Mammary epithelial cell (primary cell): ENCODE measurements at regions of chr3 and their contacts with region 1.

Region 1: DNA sequence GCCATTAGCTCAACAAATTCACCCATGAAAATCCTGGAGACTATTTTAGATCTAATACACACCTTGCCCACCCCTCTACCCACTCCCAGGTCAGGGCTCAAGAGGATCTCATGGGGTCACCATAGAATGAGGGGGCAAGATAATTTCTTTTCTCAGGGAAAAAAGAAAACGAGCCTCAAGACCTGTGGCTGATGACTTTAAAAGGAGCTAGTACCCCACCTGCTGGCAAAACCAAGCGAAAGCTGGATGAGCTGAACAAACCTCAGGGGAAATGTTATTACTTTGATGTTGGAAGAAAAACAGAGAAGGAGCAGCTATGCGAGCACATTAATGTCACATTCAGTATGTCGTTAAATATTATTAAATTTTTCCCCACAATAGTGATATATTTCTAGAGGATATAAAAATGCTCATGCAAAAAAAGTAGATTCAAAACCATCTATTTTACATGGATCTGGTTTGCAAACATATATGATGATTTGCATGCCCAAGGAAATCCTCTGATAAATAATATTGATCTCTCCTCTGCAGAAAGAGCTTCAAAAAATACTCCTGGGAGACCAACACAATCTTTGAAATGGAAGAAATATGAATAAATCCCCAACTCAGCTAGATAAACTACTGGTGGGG is 37.7 kb downstream of the PLD1 start:
- DNase-seq: peak; percentile 60
- H3K4me3 ChIP-seq: no peak overlapping the region
- H3K27ac ChIP-seq: peak overlapping the region; percentile 83
- H3K4me1 ChIP-seq: peaks cover 32% of the 10 kb centered on the region
- H3K27me3 ChIP-seq: no peaks in the 10 kb centered on the region
- CTCF ChIP-seq: peak; percentile 80 to 87

Region 2: GRCh38 chr3:171162986-171163723 is 609.4 kb before region 1 on chr3:
- CTCF ChIA-PET with region 1: no interaction called
- dilution Hi-C with region 1: no loop called
- in situ Hi-C with region 1: no loop called
- intact Hi-C with region 1: loop called (anchors 10 kb)
- DNase-seq: no peak
- H3K4me3 ChIP-seq: no peak overlapping the region
- H3K27ac ChIP-seq: no peak overlapping the region
- H3K4me1 ChIP-seq: peaks cover 16% of the 10 kb centered on the region
- H3K27me3 ChIP-seq: no peaks in the 10 kb centered on the region
- CTCF ChIP-seq: peak; percentile 55 to 60

Region 3: DNA sequence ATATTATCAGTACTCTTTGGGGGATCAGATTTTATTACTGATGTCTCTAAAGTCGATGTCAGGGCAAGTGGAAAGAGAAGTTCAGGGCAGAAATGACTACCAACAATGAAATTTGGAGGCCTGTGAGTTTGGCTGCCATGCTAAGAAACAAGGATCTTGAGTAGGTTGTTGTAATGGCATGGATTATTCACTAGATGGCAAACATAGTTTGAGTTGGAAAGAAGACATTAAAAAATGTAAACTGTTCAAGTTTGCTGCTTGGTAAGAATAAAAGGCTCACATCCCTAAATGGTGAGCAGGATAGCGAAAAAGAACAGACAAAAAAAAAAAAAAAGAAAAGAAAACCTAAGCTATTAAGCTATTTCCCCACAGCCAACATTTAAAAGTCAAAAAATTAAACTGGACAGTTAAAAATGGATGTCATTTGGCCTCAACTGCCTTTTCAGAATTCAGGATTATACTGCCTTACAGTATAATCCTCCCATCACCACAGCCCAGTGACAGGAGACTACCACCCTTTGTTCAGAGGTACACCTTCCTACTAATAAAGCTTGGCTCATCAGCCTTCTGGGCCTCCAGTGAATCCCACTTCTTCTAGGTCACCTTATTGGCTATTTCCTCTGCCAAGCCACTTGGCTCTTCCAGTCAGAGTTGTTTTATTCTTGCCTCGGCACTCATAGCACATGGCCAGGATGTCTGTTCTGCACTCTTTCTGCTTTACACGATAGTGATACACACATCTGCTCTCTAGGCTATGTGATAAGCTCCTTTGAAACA is 126.0 kb before region 1 on chr3:
- CTCF ChIA-PET with region 1: interaction called, 5 read pairs
- dilution Hi-C with region 1: loop called (anchors 5 kb)
- in situ Hi-C with region 1: loop called (anchors 5 to 10 kb)
- intact Hi-C with region 1: loop called (anchors 1 kb)
- DNase-seq: peak; percentile 46
- H3K4me3 ChIP-seq: no peak overlapping the region
- H3K27ac ChIP-seq: no peak overlapping the region
- H3K4me1 ChIP-seq: no peaks in the 10 kb centered on the region
- H3K27me3 ChIP-seq: no peaks in the 10 kb centered on the region
- CTCF ChIP-seq: peak; percentile 57 to 66

Region 4: GRCh38 chr3:171703756-171704401 is 68.7 kb before region 1 on chr3:
- CTCF ChIA-PET with region 1: interaction called, 7 read pairs
- dilution Hi-C with region 1: no loop called
- in situ Hi-C with region 1: loop called (anchors 5 kb)
- intact Hi-C with region 1: loop called (anchors 1 kb)
- DNase-seq: peak; percentile 49
- H3K4me3 ChIP-seq: no peak overlapping the region
- H3K27ac ChIP-seq: no peak overlapping the region
- H3K4me1 ChIP-seq: no peaks in the 10 kb centered on the region
- H3K27me3 ChIP-seq: no peaks in the 10 kb centered on the region
- CTCF ChIP-seq: peak; percentile 71 to 80

Region 5: DNA sequence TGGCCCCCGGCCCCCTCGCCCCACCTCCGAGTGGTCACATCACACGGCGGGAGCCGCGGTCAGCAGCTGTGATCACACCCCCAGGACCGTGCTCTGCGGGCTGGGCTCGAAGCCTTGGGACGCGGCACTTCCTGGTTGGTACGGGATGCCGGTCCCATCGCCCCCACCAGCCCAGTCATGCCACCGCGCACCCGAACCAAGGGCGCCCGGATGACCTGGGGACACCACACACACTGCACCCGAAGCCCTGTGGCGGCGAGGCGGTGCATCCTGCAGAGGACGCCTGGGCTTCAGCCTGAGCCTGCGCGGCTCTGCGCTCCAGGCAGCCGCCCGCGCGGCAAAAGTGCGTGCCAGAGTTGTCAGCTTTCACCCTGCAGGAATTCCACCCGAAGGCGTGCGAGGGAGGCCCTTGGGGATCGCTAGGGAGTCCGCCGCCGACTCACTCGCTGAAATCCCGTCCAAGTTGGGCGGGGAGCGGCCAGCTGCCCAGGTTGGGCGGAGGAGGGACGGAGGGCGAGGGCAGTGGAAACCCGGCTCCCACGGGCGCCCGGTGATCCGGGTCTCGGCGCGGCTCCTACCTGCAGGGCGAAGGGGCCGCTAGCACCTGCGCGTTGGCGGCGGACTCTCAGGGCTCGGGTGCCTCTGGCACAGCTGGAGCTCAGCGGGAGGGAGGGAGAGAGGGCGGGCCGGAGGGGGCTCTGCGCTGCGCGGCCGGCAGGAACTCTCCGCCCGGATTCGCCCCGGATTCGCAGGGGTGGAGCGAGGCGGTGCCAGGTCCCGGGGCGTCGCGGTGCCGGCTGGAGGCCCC is 37.5 kb after region 1 on chr3 and contains the start of gene PLD1:
- CTCF ChIA-PET with region 1: interaction called, 3 read pairs
- dilution Hi-C with region 1: loop called (anchors 5 kb)
- in situ Hi-C with region 1: no loop called
- intact Hi-C with region 1: loop called (anchors 5 kb)
- DNase-seq: peak; percentile 94
- H3K4me3 ChIP-seq: peak within 1 kb of the TSS; percentile 51 to 86 (median 82)
- H3K27ac ChIP-seq: peak within 1 kb of the TSS; percentile 92
- H3K4me1 ChIP-seq: peaks cover 39% of the 10 kb centered on the region
- H3K27me3 ChIP-seq: no peaks in the 10 kb centered on the region
- CTCF ChIP-seq: peak in 1 of 2 donors; percentile 6
- total RNA-seq, gene PLD1: 13.9 to 19.0 TPM